ENCODE measurements at regions of chr17 and their contacts with region 1.

Region 1: DNA sequence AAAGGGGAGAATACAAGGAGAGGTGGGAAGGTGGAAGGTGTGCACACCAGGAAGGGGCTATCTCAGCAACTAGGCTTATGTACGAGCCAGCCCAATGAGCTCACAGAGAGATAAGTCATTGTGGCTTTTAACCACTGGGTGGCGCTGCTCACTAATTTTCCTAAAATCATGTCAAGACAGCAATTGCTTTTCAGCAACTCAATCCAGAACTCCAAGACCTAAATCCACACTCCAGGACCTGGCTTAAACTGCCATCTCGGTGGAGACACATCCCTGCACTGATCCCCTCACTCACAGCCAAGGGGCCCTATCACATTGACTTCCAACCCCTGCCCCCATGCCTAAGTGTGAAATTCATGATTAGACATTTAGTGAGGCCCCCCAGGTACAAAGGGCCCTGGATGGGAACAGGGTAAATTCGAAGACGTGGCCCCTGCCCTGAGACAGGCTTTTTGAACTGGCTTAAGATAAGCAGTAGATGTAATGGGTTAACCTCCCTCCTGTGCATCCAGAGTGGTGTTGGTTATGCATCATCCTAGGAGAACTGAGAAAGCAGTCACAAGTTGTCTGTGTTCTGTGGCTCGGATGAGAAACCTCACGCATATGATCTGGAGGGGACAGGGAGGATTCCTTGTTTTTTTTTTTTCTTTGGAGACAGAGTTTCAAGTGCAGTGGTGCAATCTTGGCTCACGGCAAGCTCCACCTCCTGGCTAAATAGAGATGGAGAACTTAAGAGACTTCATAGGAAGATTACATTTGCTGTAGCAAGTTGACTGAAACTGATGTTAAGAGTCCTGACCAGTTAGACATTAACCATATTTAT is 11.5 kb downstream of the CCL16 start:
- DNase-seq: no peak

Region 2: DNA sequence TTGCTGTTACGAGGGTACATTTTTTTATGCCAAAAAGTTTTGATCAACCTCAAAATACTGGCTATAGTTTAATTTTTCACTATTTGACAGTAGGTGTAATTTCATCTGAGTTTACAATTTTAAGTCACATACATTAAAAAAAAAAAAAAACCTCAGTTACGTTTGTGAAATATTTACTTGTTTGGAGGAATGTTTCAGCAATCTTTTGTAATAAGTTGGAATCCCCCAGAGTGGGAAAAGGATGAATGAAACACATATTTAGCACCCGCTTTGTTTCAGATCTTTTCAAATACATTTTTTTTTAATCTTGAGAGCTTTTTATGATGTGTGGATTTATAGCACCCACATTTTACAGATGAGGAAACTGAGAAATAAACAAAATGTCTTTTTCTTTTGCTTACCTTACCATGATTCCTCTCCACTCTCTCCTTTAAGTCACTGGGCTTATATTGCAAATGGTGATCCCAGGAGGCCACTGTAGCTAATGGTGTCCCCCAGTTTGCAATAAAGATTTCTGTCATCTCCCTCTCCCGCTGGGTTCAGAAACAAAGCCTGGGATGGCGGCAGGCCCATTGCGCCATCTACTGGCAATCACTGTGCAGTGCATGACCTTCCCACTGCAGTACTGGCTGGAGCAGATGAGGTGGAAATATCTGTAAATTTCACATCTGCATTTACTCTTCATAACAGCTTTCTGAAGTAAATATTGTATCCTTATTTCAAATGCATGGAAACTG is 179.0 kb after region 1 on chr17:
- intact Hi-C with region 1: loop called in 1 of 2 experiments (anchors 5 kb)
- DNase-seq: peak; percentile 91

Region 3: DNA sequence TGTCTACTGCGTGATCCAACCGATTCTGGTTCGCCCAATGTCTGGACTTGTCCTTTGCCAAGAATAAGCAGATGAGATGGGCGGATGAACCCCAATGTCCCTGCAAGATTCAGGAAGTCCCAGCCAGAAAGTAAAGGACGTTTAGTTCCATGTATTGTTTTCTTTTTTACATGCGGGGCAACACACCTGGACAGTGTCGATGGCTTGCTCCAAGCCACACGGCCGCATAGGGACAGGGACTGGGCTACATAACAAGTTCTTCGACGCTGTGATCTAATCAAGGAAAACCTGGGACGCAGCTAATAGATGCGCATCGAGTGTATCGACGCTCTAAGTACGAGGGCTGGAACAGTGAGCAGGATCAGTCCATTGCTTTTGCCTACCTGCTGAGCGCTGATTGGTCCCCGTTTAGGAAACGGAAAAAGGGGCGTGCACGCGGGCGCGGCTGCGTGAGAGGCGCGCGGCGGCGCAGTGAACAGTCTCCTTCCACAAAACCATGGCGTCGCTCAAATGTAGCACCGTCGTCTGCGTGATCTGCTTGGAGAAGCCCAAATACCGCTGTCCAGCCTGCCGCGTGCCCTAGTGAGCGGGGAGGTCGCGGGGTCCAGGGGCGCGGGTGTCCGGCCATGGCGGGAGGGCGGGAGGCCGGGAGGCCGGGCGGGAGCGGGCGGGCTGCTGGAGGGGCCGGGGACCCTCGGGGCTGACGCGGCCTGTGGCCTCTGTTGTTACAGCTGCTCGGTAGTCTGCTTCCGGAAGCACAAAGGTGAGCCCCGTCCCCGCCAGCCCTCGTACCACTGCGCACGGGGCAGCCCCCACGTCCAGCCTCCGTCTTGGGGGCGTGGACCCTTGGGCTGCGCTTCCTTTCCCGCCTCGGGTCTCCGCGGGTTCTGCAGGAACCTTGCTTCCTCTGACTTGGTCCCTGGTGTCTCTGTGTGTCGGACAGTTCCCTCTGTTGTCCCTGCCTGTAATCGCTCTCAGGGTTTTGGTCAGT is 516.7 kb after region 1 on chr17 and contains the start of gene ZNHIT3:
- intact Hi-C with region 1: loop called (anchors 5 to 10 kb)
- DNase-seq: peak; percentile 97
- total RNA-seq, gene ZNHIT3: 20.7 to 20.9 TPM

Region 4: GRCh38 chr17:36793976-36794375 is 824.2 kb after region 1 on chr17:
- intact Hi-C with region 1: no loop called
- DNase-seq: no peak